ENCODE measurements at regions of chr10 and their contacts with region 1.

Region 1: GRCh38 chr10:35563261-35563891 is 41.8 kb upstream of the GJD4 start:
- DNase-seq: peak; percentile 72
- ATAC-seq: peak; percentile 51
- H3K4me3 Mint-ChIP-seq: no peak overlapping the region
- H3K27ac Mint-ChIP-seq: no peak overlapping the region
- H3K4me1 Mint-ChIP-seq: no peaks in the 10 kb centered on the region
- H3K27me3 Mint-ChIP-seq: no peaks in the 10 kb centered on the region

Region 2: GRCh38 chr10:35236739-35237138 is 326.6 kb before region 1 on chr10:
- CTCF ChIA-PET with region 1: interaction called, 8 read pairs
- POLR2A ChIA-PET with region 1: no interaction called
- intact Hi-C with region 1: loop called in 1 of 2 experiments (anchors 2 kb)
- DNase-seq: no peak
- ATAC-seq: no peak
- H3K4me3 Mint-ChIP-seq: no peak overlapping the region
- H3K27ac Mint-ChIP-seq: no peak overlapping the region
- H3K4me1 Mint-ChIP-seq: no peaks in the 10 kb centered on the region
- H3K27me3 Mint-ChIP-seq: no peaks in the 10 kb centered on the region

Region 3: GRCh38 chr10:35546824-35547273 is 16.5 kb before region 1 on chr10:
- CTCF ChIA-PET with region 1: interaction called, 16 read pairs
- POLR2A ChIA-PET with region 1: no interaction called
- intact Hi-C with region 1: no loop called
- DNase-seq: no peak
- ATAC-seq: no peak
- H3K4me3 Mint-ChIP-seq: no peak overlapping the region
- H3K27ac Mint-ChIP-seq: no peak overlapping the region
- H3K4me1 Mint-ChIP-seq: peaks cover 6% of the 10 kb centered on the region
- H3K27me3 Mint-ChIP-seq: no peaks in the 10 kb centered on the region

Region 4: DNA sequence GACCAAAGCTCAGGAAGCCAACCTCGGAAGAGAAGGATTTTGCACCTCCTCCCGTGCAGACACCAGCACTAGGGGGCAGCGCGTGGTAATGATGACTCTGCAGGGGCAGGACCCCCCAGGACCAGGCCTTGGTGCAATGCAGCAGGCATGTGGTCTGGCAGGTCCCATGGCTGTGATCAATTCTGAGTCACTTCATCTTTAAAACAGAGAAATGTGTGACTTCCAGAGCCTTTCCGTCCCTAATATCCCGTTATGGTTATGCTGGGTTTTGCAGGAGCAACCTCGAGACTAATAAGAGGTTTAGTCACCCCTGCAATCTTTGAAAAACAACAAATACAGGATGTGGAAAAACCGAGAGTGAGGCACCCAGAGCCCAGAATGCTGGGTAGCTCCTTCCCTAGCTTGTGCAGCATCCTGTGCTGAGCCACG is 11.6 kb after region 1 on chr10:
- CTCF ChIA-PET with region 1: interaction called, 10 read pairs
- POLR2A ChIA-PET with region 1: no interaction called
- intact Hi-C with region 1: no loop called
- DNase-seq: no peak
- ATAC-seq: no peak
- H3K4me3 Mint-ChIP-seq: no peak overlapping the region
- H3K27ac Mint-ChIP-seq: no peak overlapping the region
- H3K4me1 Mint-ChIP-seq: no peaks in the 10 kb centered on the region
- H3K27me3 Mint-ChIP-seq: no peaks in the 10 kb centered on the region

Measured in activated CD4-positive, alpha-beta T cell treated with anti-CD3 and anti-CD28 coated beads for 36 hours (primary cell).